Ascending aorta (tissue), 2 donors: ENCODE measurements at regions of chr3 and their contacts with region 1.

Region 1: GRCh38 chr3:48465531-48466378 is 19.2 kb downstream of the ATRIP start:
- DNase-seq: peak; percentile 100
- H3K4me3 ChIP-seq: peak overlapping the region; percentile 60 to 71
- H3K27ac ChIP-seq: peak overlapping the region; percentile 96 to 98
- H3K4me1 ChIP-seq: peaks cover 16 to 43% of the 10 kb centered on the region in 2 donors
- H3K27me3 ChIP-seq: no peaks in the 10 kb centered on the region
- CTCF ChIP-seq: peak; percentile 87 to 94 (median 89)

Region 2: GRCh38 chr3:48446425-48447193 is 19.1 kb before region 1 on chr3 and contains the start of gene ATRIP:
- intact Hi-C with region 1: loop called (anchors 2 kb)
- DNase-seq: peak in 1 of 2 donors; percentile 95
- H3K4me3 ChIP-seq: peak within 1 kb of the TSS; percentile 74 to 94
- H3K27ac ChIP-seq: peak within 1 kb of the TSS; percentile 89 to 91
- H3K4me1 ChIP-seq: peaks cover 4 to 17% of the 10 kb centered on the region in 2 donors
- H3K27me3 ChIP-seq: no peaks in the 10 kb centered on the region
- CTCF ChIP-seq: no peak
- total RNA-seq, gene ATRIP: 9.0 TPM

Region 3: DNA sequence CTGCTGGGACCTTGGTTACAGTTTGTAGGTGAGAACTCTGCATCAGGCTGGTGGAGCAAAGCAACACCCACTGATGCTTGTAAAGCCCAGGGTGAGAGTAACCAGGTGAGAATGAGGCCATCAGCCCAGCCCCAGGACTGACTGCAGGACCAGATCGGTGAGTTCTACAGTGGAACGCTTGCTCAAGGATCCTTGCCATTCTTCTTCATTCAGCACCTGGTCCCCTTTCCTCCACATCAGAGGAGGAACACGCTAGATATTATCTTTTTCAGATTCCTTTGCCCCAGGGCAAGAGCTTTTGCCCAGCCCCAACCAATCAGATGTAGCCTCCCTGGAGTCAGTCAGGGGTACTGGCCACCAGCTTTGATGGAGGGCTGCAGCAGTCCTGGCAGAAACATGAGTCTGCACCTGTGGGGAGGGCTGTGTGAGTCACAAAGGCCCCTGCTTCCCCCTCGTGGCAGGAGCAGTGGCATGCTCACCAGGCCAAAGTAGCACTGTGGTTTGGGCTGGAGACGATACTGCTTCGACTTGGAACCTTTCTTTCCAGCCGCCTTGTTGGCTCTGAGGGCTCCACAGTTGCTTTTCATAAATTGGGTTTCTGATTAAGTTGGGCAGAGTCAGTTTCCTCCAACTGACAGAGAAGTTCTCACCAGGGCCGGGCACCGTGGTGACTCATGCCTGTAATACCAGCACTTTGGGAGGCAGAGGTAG is 41.8 kb after region 1 on chr3:
- intact Hi-C with region 1: loop called (anchors 1 kb)
- DNase-seq: peak; percentile 35 to 81
- H3K4me3 ChIP-seq: no peak overlapping the region
- H3K27ac ChIP-seq: peak overlapping the region; percentile 69 to 76
- H3K4me1 ChIP-seq: peaks cover 0 to 23% of the 10 kb centered on the region in 2 donors
- H3K27me3 ChIP-seq: no peaks in the 10 kb centered on the region
- CTCF ChIP-seq: peak; percentile 34 to 58 (median 52)

Region 4: GRCh38 chr3:48548729-48549705 is 83.3 kb after region 1 on chr3:
- intact Hi-C with region 1: loop called (anchors 1 kb)
- DNase-seq: peak; percentile 46 to 94
- H3K4me3 ChIP-seq: no peak overlapping the region
- H3K27ac ChIP-seq: no peak overlapping the region
- H3K4me1 ChIP-seq: no peaks in the 10 kb centered on the region
- H3K27me3 ChIP-seq: no peaks in the 10 kb centered on the region
- CTCF ChIP-seq: peak; percentile 91 to 96 (median 94)

Region 5: GRCh38 chr3:48652923-48653715 is 187.4 kb after region 1 on chr3:
- intact Hi-C with region 1: no loop called
- DNase-seq: no peak
- H3K4me3 ChIP-seq: no peak overlapping the region
- H3K27ac ChIP-seq: no peak overlapping the region
- H3K4me1 ChIP-seq: peaks cover 5 to 17% of the 10 kb centered on the region in 2 donors
- H3K27me3 ChIP-seq: no peaks in the 10 kb centered on the region
- CTCF ChIP-seq: no peak

Region 6: GRCh38 chr3:48663415-48664312 is 197.9 kb after region 1 on chr3:
- intact Hi-C with region 1: loop called (anchors 1 kb)
- DNase-seq: peak; percentile 92 to 99
- H3K4me3 ChIP-seq: peak overlapping the region; percentile 65 to 73
- H3K27ac ChIP-seq: peak overlapping the region; percentile 95 to 97
- H3K4me1 ChIP-seq: peaks cover 6 to 14% of the 10 kb centered on the region in 2 donors
- H3K27me3 ChIP-seq: no peaks in the 10 kb centered on the region
- CTCF ChIP-seq: peak; percentile 72 to 84 (median 82)

Region 7: DNA sequence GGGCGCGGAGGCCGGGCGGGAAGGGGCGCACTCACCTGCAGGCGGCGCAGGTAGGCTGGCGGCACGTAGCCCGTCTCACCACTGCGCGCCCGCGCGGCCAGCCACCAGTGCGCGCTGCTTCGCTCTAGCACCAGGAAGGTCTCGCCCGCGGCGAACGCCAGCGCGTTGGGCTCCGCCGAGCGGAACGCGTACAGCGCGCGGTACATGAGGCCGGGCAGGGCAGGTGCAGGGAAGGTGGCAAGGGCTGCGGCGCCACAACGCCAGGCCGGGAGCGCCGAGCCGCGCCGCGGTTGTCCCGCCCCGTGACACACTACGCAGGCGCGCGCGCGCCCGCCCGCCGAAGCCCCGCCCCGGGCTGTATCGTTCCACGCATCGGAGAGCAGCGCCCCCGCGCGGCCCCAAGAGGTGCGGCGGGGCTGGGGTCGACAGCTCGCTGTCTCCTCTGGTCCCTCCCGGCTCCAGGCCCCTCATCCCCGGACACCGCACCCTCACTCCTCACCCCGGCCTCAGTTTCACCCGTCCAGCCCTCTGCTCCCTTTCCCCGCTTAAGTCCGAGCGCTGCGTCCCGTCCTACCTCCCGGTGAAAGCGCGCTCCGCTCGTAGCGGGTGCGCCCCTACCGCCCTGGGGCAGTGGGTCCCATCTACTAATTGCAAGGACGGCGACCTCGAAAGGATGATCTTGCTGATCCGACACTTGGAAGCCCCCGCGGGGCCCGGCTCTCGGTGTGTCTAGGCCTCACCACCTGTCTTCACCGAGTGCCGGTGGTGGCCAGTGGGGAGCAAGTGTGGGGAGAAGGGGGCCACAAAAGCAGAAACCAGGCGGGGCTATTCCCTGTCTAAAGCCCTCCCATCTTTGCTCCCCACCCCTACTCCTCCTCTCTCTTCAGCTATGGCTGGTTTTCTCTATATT is 220.1 kb after region 1 on chr3 and contains the start of gene NCKIPSD:
- intact Hi-C with region 1: loop called (anchors 1 kb)
- DNase-seq: peak; percentile 50 to 93
- H3K4me3 ChIP-seq: peak within 1 kb of the TSS; percentile 81 to 94
- H3K27ac ChIP-seq: peak within 1 kb of the TSS; percentile 86 to 90
- H3K4me1 ChIP-seq: peaks cover 10 to 23% of the 10 kb centered on the region in 2 donors
- H3K27me3 ChIP-seq: no peaks in the 10 kb centered on the region
- CTCF ChIP-seq: peak; percentile 63 to 96 (median 75)
- total RNA-seq, gene NCKIPSD: 102 TPM

Region 8: DNA sequence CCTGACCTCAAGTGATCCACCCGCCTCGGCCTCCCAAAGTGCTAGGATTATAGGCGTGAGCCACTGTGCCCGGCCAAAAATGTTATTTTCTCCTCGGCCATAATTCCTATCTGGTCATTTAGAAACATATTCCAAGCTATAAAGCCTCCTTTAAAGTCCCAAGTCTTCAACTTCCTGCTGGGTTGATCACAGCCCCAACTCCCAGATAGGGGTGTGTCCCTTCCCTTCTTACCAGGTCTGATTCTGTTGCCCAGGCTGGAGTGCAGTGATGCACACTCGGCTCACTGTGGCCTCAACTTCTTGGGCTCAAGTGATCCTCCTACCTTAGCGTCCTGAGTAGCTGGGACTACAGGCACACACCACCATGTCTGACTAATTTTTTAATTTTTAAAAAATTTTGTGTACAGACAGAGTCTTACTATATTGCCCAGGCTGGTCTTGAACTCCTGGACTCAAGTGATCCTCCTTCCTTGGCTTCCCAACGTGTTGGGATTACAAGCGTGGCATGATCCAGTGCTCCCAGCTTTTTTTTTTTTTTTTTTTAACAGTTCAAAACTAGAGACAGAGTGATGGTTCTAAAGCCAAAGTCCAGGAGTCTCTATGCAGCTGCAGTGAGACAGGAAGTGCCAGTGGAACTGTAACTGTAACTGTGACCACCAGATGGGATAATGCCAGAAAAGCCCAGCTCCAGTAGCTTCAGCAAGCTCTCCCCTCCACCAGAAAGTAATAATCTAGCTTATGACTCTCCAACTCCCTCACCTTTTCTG is 390.1 kb after region 1 on chr3:
- intact Hi-C with region 1: no loop called
- DNase-seq: no peak
- H3K4me3 ChIP-seq: no peak overlapping the region
- H3K27ac ChIP-seq: no peak overlapping the region
- H3K4me1 ChIP-seq: no peaks in the 10 kb centered on the region
- H3K27me3 ChIP-seq: no peaks in the 10 kb centered on the region
- CTCF ChIP-seq: no peak